Activated T-helper 1 cell treated with anti-CD3 and anti-CD28 coated beads, Interleukin-12 subunit alpha, Interleukin-12 subunit beta, Interleukin-2, Interleukin-4 antibody, amounts not matched to agents 30 ng/mL and 10 ng/mL and 1 ng/mL, durations not matched to agents 14 hours and 24 hours and 36 hours (primary cell): ENCODE measurements at regions of chr5 and their contacts with region 1.

Region 1: GRCh38 chr5:55440188-55440646 is 94.5 kb downstream of the PLPP1 start:
- DNase-seq: no peak
- H3K4me3 Mint-ChIP-seq: no peak overlapping the region
- H3K27ac Mint-ChIP-seq: peak overlapping the region; percentile 77
- H3K4me1 Mint-ChIP-seq: peaks cover 35% of the 10 kb centered on the region
- H3K27me3 Mint-ChIP-seq: no peaks in the 10 kb centered on the region

Region 2: DNA sequence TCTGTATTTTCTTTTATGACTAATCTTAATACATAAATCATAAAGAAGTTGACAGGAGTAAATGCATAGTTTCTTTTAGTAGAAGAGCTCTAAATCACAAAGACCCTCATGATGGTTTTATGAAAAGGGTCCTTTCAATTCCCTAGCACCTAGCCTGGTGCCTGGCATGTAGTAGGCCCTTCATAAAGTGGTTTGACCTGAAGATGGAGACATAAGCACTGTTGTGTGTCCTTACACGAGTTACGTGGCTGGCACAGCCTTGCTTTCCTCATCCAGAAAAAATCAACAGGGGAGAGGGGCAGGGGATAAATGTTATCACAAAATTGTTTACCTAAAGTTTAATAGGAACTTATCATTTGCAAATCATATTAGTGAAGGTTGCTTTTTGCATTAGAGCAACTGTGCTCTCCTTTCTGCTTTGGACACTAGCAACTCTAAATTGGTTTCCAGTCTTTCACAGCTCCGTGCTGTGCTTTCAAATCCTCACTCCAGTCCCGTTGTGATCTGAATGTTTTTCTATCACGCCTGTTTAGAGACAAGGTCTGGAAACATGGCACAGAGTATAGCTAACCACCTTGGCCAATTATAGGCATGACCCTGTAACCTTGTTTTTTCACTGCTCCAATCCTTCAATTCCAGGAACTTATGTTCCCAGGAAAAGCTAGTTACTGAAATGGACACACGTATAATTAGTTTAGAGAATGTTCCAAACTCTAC is 1185.6 kb before region 1 on chr5:
- intact Hi-C with region 1: no loop called
- DNase-seq: no peak
- H3K4me3 Mint-ChIP-seq: no peak overlapping the region
- H3K27ac Mint-ChIP-seq: no peak overlapping the region
- H3K4me1 Mint-ChIP-seq: peaks cover 7% of the 10 kb centered on the region
- H3K27me3 Mint-ChIP-seq: no peaks in the 10 kb centered on the region

Region 3: DNA sequence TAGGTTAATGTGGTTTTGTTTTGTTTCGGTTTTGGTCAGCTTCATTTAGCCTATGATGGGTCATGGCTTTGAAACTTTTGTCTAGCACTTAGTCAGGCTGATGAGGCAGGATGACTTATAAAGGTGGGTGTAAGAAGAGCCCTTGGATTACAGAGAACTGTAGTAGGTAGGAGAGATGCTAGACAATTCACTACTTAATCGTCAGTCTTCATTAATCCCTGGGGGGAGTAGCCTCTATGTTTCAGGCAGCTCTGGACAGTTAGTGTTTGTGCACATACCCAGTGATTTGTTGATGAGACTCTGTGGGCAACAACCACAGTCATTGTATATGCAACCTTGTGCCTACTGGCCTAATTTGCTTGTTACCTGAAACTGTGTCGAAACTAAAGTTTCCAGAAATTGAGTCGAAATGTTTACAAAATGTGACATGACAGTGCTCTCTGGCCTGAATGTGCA is 19.1 kb before region 1 on chr5:
- intact Hi-C with region 1: loop called (anchors 1 kb)
- DNase-seq: no peak
- H3K4me3 Mint-ChIP-seq: no peak overlapping the region
- H3K27ac Mint-ChIP-seq: peak overlapping the region; percentile 3
- H3K4me1 Mint-ChIP-seq: peaks cover 16% of the 10 kb centered on the region
- H3K27me3 Mint-ChIP-seq: no peaks in the 10 kb centered on the region

Region 4: DNA sequence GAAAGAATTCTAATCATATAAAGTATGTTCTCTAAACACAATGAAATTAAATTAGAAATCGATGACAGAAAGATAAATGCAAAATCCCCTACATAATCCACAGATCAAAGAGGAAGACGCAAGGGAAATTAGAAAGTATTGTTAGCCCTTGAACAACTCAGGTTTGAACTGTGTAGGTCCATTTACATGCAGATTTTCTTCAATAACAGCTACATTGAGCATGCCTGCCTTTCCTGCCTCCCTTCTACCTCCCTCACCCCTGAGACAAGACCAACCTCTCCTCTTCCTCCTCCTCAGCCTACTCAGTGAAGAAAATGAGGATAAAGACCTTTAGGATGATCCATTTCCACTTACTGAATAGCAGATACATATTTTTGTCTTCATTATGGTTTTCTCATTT is 19.4 kb after region 1 on chr5:
- intact Hi-C with region 1: no loop called
- DNase-seq: no peak
- H3K4me3 Mint-ChIP-seq: no peak overlapping the region
- H3K27ac Mint-ChIP-seq: no peak overlapping the region
- H3K4me1 Mint-ChIP-seq: peaks cover 14% of the 10 kb centered on the region
- H3K27me3 Mint-ChIP-seq: no peaks in the 10 kb centered on the region

Region 5: GRCh38 chr5:55480781-55481180 is 40.6 kb after region 1 on chr5:
- intact Hi-C with region 1: loop called (anchors 2 kb)
- DNase-seq: no peak
- H3K4me3 Mint-ChIP-seq: no peak overlapping the region
- H3K27ac Mint-ChIP-seq: no peak overlapping the region
- H3K4me1 Mint-ChIP-seq: peaks cover 20% of the 10 kb centered on the region
- H3K27me3 Mint-ChIP-seq: no peaks in the 10 kb centered on the region